ENCODE measurements at regions of chr11 and their contacts with region 1.

Region 1: DNA sequence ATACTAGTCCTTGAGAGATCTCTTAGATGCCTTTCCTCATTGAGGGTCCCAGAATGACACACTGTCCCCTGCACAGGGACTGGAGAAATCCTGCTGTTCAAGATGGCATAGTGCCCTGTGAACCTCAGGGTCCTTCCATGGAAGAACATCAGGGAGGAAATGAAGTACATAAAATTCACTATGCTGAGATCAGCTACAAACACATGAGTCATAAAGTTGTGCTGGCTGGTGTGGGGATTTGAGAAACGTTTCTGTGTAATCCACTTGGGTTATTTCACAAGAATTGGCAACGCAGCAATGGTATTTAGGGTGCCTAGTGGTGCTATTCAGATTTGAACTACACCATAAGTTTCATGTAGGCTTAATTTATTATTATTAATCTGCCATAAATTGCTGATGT is 174.4 kb downstream of the MAML2 start:
- DNase-seq: no peak

Region 2: DNA sequence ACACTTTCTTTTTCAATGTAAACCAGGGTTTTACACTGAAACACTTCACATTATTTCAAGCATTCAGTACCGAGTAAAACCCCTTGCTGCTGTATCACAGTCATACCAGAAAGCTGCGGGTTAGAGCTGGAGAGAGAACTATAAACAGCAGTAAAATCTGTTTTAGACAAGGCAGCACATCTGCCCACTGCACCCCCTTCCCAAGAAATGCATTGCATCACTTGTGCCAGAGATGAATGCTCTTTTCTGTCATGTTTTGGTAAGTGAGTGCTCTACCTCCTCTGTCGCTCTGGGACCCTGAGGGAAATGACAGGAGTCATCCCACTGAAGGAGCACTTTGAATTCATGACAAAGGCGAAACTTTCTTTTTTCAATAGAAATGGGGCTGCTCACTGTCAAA is 67.1 kb after region 1 on chr11:
- intact Hi-C with region 1: loop called in 1 of 2 experiments (anchors 10 kb)
- DNase-seq: no peak

Measured in posterior vena cava (tissue), 2 donors.